T-cell (primary cell): ENCODE measurements at regions of chr3 and their contacts with region 1.

Region 1: DNA sequence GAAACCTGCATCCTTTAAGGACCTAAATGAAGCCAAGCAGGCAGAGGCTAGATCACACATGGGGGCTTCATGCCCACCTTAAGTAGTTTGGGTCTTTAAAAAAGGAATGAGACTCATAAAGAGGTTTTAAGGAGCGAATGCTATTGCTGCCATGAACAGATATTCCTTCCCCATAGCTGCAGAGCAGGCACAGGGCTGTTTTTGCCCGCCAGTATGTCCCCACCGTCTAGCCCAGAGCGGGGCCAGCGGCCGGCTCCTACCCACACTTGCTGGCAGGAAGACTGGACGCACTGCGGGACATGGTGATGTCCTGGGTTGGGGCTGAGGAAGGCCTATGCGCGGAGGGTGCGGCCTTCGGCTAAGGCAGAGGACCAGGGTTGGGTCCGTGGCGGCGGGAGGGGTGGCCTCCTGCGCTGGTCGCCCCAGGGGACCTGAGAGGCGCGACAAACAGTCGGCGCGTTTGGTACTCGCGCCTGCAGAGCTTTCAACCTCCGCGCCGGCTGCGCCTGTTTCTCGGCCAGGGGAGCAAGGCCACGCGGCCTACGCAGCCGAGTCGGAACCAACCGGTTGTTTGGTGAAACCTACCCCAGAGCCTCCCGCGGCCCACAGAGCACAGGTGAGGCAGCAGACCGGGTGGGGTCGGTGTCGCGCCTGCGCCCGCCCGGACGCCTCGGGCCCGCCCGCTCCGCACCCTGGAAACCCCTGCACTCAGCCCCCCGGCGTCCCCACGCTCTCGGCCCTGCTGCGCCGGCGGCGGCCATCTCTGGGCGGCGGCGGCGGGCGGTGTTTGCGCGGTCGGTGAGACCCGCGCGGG is at the start of gene FAIM:
- DNase-seq: peak in 34 of 35 experiments; percentile 40 to 75 (median 58)
- ATAC-seq: peak; percentile 75 to 80 (median 78)
- H3K4me3 ChIP-seq: peak within 1 kb of the TSS; percentile 61 to 67
- H3K4me3 Mint-ChIP-seq: peak within 1 kb of the TSS; percentile 79 to 85 (median 82)
- H3K27ac ChIP-seq: peak within 1 kb of the TSS; percentile 80
- H3K27ac Mint-ChIP-seq: peak within 1 kb of the TSS; percentile 93 to 98
- H3K4me1 ChIP-seq: peaks cover 0 to 20% of the 10 kb centered on the region in 2 experiments
- H3K4me1 Mint-ChIP-seq: peaks cover 12 to 20% (median 16%) of the 10 kb centered on the region in 3 donors
- H3K27me3 ChIP-seq: no peaks in the 10 kb centered on the region
- H3K27me3 Mint-ChIP-seq: peaks cover 0 to 3% of the 10 kb centered on the region in 2 donors
- total RNA-seq, gene FAIM: 2.9 to 4.8 (median 3.0) TPM

Region 2: DNA sequence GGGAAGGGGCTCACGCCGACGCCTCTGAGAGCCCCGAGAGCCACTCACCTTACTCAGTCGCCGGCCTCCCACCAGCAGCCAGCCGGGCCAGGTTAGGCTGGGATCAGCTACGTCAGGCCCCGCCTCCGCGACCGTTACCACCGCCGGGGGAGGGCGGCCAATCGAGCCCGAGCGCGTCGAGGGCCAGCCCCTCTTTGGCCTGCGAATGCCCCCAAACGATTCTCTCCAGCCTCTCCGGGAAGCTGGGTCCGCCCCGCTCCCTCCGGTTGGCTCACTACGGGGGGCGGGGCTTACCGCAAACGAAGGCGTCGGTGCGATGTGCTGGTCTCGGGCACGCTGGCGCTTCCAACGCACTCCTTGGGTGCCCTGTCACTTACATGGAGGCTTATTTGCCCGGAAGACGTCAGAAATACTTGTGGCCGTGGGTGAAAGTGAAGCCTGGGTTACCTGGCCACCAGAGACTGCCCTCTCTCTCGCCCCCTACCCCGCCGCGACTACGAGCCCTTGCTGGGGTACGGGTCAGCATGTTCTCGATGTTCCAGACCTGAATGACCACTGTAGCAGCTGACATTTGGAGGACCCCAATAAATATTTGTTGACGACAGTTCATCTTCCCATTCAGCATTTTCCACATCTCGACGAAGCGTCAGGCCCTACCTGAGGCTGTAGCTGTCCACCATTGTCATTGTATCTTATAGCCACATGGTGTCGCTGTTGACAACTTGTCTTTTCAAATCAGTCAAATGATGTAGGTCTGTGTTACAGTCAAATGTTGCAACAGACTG is 14.2 kb before region 1 on chr3 and contains the start of gene CEP70:
- CTCF ChIA-PET with region 1: interaction called, 4 to 19 read pairs
- POLR2A ChIA-PET with region 1: no interaction called
- DNase-seq: peak; percentile 75 to 94 (median 89)
- ATAC-seq: peak; percentile 92 to 96 (median 94)
- H3K4me3 ChIP-seq: peak within 1 kb of the TSS; percentile 85 to 86
- H3K4me3 Mint-ChIP-seq: peak within 1 kb of the TSS; percentile 86 to 96 (median 89)
- H3K27ac ChIP-seq: peak within 1 kb of the TSS; percentile 94
- H3K27ac Mint-ChIP-seq: peak within 1 kb of the TSS; percentile 95 to 97
- H3K4me1 ChIP-seq: peaks cover 5 to 16% of the 10 kb centered on the region in 2 experiments
- H3K4me1 Mint-ChIP-seq: peaks cover 13 to 20% (median 13%) of the 10 kb centered on the region in 3 donors
- H3K27me3 ChIP-seq: no peaks in the 10 kb centered on the region
- H3K27me3 Mint-ChIP-seq: no peaks in the 10 kb centered on the region
- total RNA-seq, gene CEP70: 14.5 to 23.4 (median 21.7) TPM

Region 3: GRCh38 chr3:138767498-138768104 is 159.1 kb after region 1 on chr3:
- CTCF ChIA-PET with region 1: no interaction called
- POLR2A ChIA-PET with region 1: interaction called in 1 of 2 experiments, 10 read pairs
- DNase-seq: no peak
- ATAC-seq: no peak
- H3K4me3 ChIP-seq: no peak overlapping the region
- H3K4me3 Mint-ChIP-seq: no peak overlapping the region
- H3K27ac ChIP-seq: no peak overlapping the region
- H3K27ac Mint-ChIP-seq: no peak overlapping the region
- H3K4me1 ChIP-seq: peaks cover 7 to 8% of the 10 kb centered on the region in 2 experiments
- H3K4me1 Mint-ChIP-seq: peaks cover 12 to 28% (median 24%) of the 10 kb centered on the region in 3 donors
- H3K27me3 ChIP-seq: no peaks in the 10 kb centered on the region
- H3K27me3 Mint-ChIP-seq: no peaks in the 10 kb centered on the region